ENCODE measurements at regions of chr17 and their contacts with region 1.

Region 1: GRCh38 chr17:78250891-78251794 is 19.7 kb downstream of the TMEM235 start:
- DNase-seq: peak; percentile 68 to 89 (median 83)
- ATAC-seq: peak; percentile 35
- H3K4me3 ChIP-seq: peak overlapping the region; percentile 23 to 51
- H3K4me3 Mint-ChIP-seq: peak overlapping the region; percentile 86
- H3K27ac ChIP-seq: peak overlapping the region in 1 of 2 experiments; percentile 56
- H3K27ac Mint-ChIP-seq: peak overlapping the region; percentile 99
- H3K4me1 ChIP-seq: peaks cover 49% of the 10 kb centered on the region
- H3K4me1 Mint-ChIP-seq: peaks cover 48% of the 10 kb centered on the region
- H3K27me3 ChIP-seq: no peaks in the 10 kb centered on the region
- H3K27me3 Mint-ChIP-seq: no peaks in the 10 kb centered on the region
- CTCF ChIP-seq: peak; percentile 99

Region 2: DNA sequence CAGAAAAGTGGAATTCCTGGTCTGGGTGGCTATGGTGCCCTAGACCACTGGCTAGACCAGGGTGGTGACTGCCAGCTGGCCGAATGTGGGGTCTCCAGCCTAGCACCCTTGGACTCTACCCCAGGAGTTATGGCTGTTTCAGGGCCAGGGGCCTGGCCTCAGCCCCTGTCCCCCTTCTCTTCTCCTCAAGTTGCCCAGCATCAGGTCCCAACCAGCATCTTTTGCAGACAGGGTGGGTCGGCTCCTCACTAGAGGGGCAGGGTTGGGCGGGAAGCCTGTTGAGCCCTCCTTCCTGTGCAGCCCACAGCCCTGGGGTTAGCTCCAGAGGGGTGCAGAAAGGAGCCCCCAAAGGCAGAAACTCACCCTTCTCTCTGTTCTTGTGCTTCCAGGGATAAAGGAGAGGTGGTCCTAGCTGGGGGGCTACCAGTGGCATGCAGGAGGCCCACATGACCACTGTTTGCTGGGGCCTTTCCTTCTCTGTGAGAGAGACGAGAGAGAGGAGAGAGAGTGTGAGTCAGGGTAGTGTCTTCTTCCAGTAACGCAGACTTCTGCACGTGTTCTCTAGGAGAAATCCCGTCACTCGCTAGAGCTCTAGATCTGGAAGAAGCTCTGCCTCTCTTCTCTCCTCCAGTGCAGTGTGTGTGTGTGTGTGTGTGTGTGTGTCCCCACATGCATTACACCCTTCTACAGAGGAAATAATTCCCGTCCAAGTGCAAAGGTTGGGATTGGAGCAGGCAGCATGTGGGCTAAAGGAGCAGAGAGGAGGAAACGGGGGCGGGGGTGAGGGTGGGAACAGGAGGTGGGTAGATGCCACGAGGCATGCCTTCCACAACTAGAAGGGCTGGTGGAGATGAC is 900.9 kb before region 1 on chr17:
- CTCF ChIA-PET with region 1: no interaction called
- POLR2A ChIA-PET with region 1: no interaction called
- intact Hi-C with region 1: loop called in 1 of 2 experiments (anchors 10 kb)
- DNase-seq: peak in 1 of 9 experiments; percentile 35
- ATAC-seq: no peak
- H3K4me3 ChIP-seq: no peak overlapping the region
- H3K4me3 Mint-ChIP-seq: no peak overlapping the region
- H3K27ac ChIP-seq: no peak overlapping the region
- H3K27ac Mint-ChIP-seq: no peak overlapping the region
- H3K4me1 ChIP-seq: peaks cover 18% of the 10 kb centered on the region
- H3K4me1 Mint-ChIP-seq: peaks cover 27% of the 10 kb centered on the region
- H3K27me3 ChIP-seq: no peaks in the 10 kb centered on the region
- H3K27me3 Mint-ChIP-seq: no peaks in the 10 kb centered on the region
- CTCF ChIP-seq: no peak

Region 3: GRCh38 chr17:78082988-78083387 is 168.2 kb before region 1 on chr17:
- CTCF ChIA-PET with region 1: interaction called, 5 read pairs
- POLR2A ChIA-PET with region 1: no interaction called
- intact Hi-C with region 1: loop called in 1 of 2 experiments (anchors 1 kb)
- DNase-seq: no peak
- ATAC-seq: no peak
- H3K4me3 ChIP-seq: no peak overlapping the region
- H3K4me3 Mint-ChIP-seq: no peak overlapping the region
- H3K27ac ChIP-seq: no peak overlapping the region
- H3K27ac Mint-ChIP-seq: peak overlapping the region; percentile 18
- H3K4me1 ChIP-seq: no peaks in the 10 kb centered on the region
- H3K4me1 Mint-ChIP-seq: peaks cover 3% of the 10 kb centered on the region
- H3K27me3 ChIP-seq: no peaks in the 10 kb centered on the region
- H3K27me3 Mint-ChIP-seq: no peaks in the 10 kb centered on the region
- CTCF ChIP-seq: no peak

Region 4: DNA sequence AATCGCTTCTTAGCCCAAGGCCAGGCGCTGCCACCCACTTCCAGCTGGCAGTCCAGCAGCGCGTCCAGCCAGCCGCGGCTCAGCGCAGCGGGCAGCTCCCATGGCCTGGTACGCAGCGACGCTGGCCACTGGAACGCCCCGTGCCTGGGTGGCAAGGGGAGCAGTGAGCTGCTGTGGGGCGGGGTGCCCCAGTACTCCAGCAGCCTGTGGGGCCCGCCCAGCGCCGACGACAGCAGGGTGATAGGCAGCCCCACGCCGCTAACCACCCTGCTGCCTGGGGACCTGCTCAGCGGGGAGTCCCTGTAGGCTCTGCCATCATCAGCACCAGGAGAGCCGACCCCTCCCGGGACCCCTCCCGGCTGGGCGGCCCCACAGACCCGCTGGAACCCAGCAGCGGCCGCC is 146.6 kb before region 1 on chr17:
- CTCF ChIA-PET with region 1: no interaction called
- POLR2A ChIA-PET with region 1: no interaction called
- intact Hi-C with region 1: no loop called
- DNase-seq: no peak
- ATAC-seq: no peak
- H3K4me3 ChIP-seq: no peak overlapping the region
- H3K4me3 Mint-ChIP-seq: no peak overlapping the region
- H3K27ac ChIP-seq: no peak overlapping the region
- H3K27ac Mint-ChIP-seq: no peak overlapping the region
- H3K4me1 ChIP-seq: no peaks in the 10 kb centered on the region
- H3K4me1 Mint-ChIP-seq: peaks cover 10% of the 10 kb centered on the region
- H3K27me3 ChIP-seq: no peaks in the 10 kb centered on the region
- H3K27me3 Mint-ChIP-seq: no peaks in the 10 kb centered on the region
- CTCF ChIP-seq: no peak

Region 5: GRCh38 chr17:78128551-78129350 is 122.4 kb before region 1 on chr17 and contains the start of gene TMC6:
- CTCF ChIA-PET with region 1: interaction called, 5 read pairs
- POLR2A ChIA-PET with region 1: interaction called, 4 read pairs
- intact Hi-C with region 1: loop called (anchors 2 kb)
- DNase-seq: peak; percentile 52 to 91 (median 82)
- ATAC-seq: peak; percentile 25
- H3K4me3 ChIP-seq: peak within 1 kb of the TSS; percentile 95 to 97
- H3K4me3 Mint-ChIP-seq: peak within 1 kb of the TSS; percentile 92
- H3K27ac ChIP-seq: peak within 1 kb of the TSS; percentile 74 to 80
- H3K27ac Mint-ChIP-seq: peak within 1 kb of the TSS; percentile 98
- H3K4me1 ChIP-seq: peaks cover 59% of the 10 kb centered on the region
- H3K4me1 Mint-ChIP-seq: peaks cover 53% of the 10 kb centered on the region
- H3K27me3 ChIP-seq: no peaks in the 10 kb centered on the region
- H3K27me3 Mint-ChIP-seq: no peaks in the 10 kb centered on the region
- CTCF ChIP-seq: no peak
- total RNA-seq, gene TMC6: 518 to 535 TPM

Region 6: GRCh38 chr17:78176548-78177025 is 74.6 kb before region 1 on chr17:
- CTCF ChIA-PET with region 1: interaction called, 5 read pairs
- POLR2A ChIA-PET with region 1: no interaction called
- intact Hi-C with region 1: loop called in 1 of 2 experiments (anchors 10 kb)
- DNase-seq: peak; percentile 65 to 89 (median 77)
- ATAC-seq: peak; percentile 90
- H3K4me3 ChIP-seq: no peak overlapping the region
- H3K4me3 Mint-ChIP-seq: no peak overlapping the region
- H3K27ac ChIP-seq: no peak overlapping the region
- H3K27ac Mint-ChIP-seq: no peak overlapping the region
- H3K4me1 ChIP-seq: peaks cover 39% of the 10 kb centered on the region
- H3K4me1 Mint-ChIP-seq: peaks cover 41% of the 10 kb centered on the region
- H3K27me3 ChIP-seq: no peaks in the 10 kb centered on the region
- H3K27me3 Mint-ChIP-seq: no peaks in the 10 kb centered on the region
- CTCF ChIP-seq: peak; percentile 88

Region 7: GRCh38 chr17:78289802-78290363 is 38.7 kb after region 1 on chr17:
- CTCF ChIA-PET with region 1: interaction called, 65 read pairs
- POLR2A ChIA-PET with region 1: interaction called, 5 read pairs
- intact Hi-C with region 1: loop called in 1 of 2 experiments (anchors 1 kb)
- DNase-seq: peak; percentile 49 to 89 (median 77)
- ATAC-seq: peak; percentile 99
- H3K4me3 ChIP-seq: no peak overlapping the region
- H3K4me3 Mint-ChIP-seq: no peak overlapping the region
- H3K27ac ChIP-seq: no peak overlapping the region
- H3K27ac Mint-ChIP-seq: no peak overlapping the region
- H3K4me1 ChIP-seq: peaks cover 9% of the 10 kb centered on the region
- H3K4me1 Mint-ChIP-seq: peaks cover 4% of the 10 kb centered on the region
- H3K27me3 ChIP-seq: no peaks in the 10 kb centered on the region
- H3K27me3 Mint-ChIP-seq: no peaks in the 10 kb centered on the region
- CTCF ChIP-seq: peak; percentile 68

Region 8: DNA sequence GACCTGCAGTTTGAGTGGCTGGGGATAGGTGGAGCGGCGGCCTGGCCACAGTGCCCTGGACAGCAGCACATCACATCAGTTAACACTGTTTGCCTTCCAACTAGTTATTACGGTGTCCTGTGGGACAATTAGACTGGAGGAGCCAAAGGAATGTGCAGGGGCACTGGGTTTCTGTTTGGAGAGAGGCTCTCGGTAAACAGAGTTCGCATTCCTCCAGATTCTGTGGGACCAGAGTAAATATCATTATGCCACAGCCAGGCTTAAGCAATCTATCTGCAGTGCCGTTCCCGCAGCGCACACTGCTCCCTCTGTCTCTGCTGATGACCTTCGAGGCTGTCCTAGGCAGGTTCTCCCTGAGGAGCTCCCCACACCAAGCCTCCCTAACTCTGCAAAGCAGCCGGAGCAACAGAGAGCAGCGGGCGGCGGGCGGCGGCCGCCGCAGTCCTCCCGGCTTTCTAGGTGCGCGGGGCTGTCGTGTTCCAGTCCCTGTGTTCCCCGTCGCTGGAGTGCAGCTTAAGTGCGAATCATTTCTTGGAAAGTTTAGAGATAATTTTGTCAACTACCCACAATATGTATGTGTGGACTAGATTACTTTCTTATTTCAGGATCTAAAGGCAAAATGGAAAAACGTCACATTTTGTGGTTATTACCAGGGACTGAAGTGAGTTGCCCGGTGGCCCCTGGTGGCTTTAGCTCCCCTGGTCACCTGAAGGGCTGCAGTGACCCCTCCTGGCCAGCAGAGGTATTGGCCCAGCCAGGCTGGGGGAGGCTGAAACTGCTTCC is 170.5 kb after region 1 on chr17:
- CTCF ChIA-PET with region 1: interaction called, 72 read pairs
- POLR2A ChIA-PET with region 1: interaction called, 7 read pairs
- intact Hi-C with region 1: loop called (anchors 1 kb)
- DNase-seq: peak; percentile 59 to 82 (median 75)
- ATAC-seq: peak; percentile 97
- H3K4me3 ChIP-seq: no peak overlapping the region
- H3K4me3 Mint-ChIP-seq: no peak overlapping the region
- H3K27ac ChIP-seq: no peak overlapping the region
- H3K27ac Mint-ChIP-seq: no peak overlapping the region
- H3K4me1 ChIP-seq: peaks cover 5% of the 10 kb centered on the region
- H3K4me1 Mint-ChIP-seq: peaks cover 11% of the 10 kb centered on the region
- H3K27me3 ChIP-seq: no peaks in the 10 kb centered on the region
- H3K27me3 Mint-ChIP-seq: no peaks in the 10 kb centered on the region
- CTCF ChIP-seq: peak; percentile 99